ENCODE measurements at regions of chr2 and their contacts with region 1.

Region 1: DNA sequence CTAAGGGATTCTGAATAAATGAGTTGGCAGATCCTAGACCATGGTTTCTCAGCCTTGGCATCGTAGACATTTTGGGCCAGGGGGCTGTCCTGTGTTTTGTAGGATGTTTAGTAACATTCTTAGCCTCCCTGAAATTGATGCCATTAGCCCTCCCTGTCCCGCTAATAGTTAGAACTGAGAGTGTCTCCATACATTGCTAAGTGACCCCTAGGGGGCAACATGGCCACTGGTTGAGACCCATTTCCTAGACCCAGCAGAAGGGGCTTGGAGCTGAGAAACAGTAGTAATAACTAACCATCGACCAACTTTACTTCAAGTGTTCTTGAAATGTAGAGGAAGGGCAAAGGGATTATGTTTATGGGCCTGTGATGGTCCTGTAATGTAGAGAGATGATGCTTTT is 40.8 kb downstream of the KCMF1 start:
- DNase-seq: peak; percentile 33
- ATAC-seq: peak; percentile 86
- H3K4me3 Mint-ChIP-seq: no peak overlapping the region
- H3K27ac Mint-ChIP-seq: no peak overlapping the region
- H3K4me1 Mint-ChIP-seq: peaks cover 69% of the 10 kb centered on the region
- H3K27me3 Mint-ChIP-seq: no peaks in the 10 kb centered on the region
- CTCF ChIP-seq: peak; percentile 53

Region 2: GRCh38 chr2:84939426-84940087 is 72.2 kb before region 1 on chr2:
- CTCF ChIA-PET with region 1: interaction called, 10 read pairs
- POLR2A ChIA-PET with region 1: no interaction called
- DNase-seq: no peak
- ATAC-seq: peak; percentile 37
- H3K4me3 Mint-ChIP-seq: no peak overlapping the region
- H3K27ac Mint-ChIP-seq: peak overlapping the region; percentile 86; the same call in 1 of the 2 replicates
- H3K4me1 Mint-ChIP-seq: peaks cover 26% of the 10 kb centered on the region
- H3K27me3 Mint-ChIP-seq: no peaks in the 10 kb centered on the region; the same call in 1 of the 2 replicates
- CTCF ChIP-seq: no peak

Region 3: DNA sequence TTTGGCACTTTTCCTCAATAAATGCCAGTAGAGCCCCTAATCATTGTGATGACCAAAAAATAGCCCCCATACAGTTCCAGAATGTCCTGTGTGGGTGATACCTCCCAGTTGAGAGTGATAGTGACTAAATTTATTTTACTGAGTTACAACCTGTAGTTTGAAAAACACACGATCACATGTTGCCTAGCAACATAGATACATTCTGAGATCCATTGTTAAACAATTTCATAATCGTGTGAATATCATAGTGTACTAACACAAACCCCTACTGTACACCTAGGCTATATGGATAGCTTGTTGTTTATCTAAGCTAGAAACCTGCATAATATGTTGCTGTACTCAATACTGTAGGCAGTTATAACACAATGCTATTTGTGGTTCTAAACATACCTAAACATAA is 10.2 kb before region 1 on chr2:
- CTCF ChIA-PET with region 1: interaction called, 23 read pairs
- POLR2A ChIA-PET with region 1: no interaction called
- DNase-seq: no peak
- ATAC-seq: no peak
- H3K4me3 Mint-ChIP-seq: no peak overlapping the region
- H3K27ac Mint-ChIP-seq: no peak overlapping the region; the same call in 1 of the 2 replicates
- H3K4me1 Mint-ChIP-seq: peaks cover 2% of the 10 kb centered on the region; the same call in 1 of the 2 replicates
- H3K27me3 Mint-ChIP-seq: no peaks in the 10 kb centered on the region
- CTCF ChIP-seq: no peak